Tibial artery (tissue), 4 donors: ENCODE measurements at regions of chr19 and their contacts with region 1.

Region 1: GRCh38 chr19:56594783-56595547 is at the start of gene ZNF71:
- DNase-seq: peak; percentile 82 to 93
- H3K4me3 ChIP-seq: peak within 1 kb of the TSS; percentile 97 to 98
- H3K27ac ChIP-seq: peak within 1 kb of the TSS; percentile 78 to 88
- H3K4me1 ChIP-seq: peaks cover 0 to 13% (median 7%) of the 10 kb centered on the region in 4 donors
- H3K27me3 ChIP-seq: no peaks in the 10 kb centered on the region
- CTCF ChIP-seq: no peak

Region 2: DNA sequence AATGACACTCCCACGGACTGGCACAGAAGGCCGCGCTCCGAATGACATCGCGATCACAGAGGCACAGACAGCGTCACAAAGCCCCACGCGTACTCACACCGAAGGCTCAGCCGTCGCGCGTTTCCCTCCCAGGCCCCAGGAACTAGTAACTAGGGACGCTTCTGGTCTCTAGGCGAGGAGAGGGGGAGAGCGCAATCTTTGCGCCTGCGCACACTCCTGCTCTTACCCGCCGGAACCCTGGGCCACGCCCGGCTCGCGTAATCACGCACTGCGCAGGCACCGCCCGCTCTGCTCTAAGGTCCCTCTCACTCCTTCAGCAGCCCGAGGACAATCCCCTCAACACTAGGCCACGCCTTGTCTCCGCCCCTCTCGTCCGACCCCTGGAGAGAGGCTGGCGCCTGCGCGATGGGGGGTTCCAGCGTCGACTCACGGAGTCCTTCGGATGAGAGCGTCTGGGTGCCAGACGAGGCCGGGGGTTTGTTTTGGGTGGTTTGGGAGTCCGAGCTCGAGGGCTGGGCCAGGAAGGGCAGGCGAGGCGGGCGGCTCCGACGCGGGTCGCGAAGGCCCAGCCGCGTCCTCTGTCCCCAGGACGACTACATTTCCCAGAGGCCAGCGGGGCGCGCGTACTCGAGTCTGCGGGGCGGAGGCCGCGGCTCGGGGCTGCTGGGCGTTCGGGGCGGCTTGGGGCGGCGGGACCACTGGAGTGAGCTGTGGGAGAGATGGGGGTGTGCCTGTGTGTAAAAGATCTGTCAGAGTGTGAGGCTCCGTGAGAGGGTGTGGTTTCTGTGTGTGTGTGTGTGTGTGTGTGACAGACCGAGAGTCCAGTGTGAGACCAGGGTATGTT is 87.3 kb before region 1 on chr19 and contains the start of gene ZNF471:
- intact Hi-C with region 1: loop called (anchors 10 kb)
- DNase-seq: peak; percentile 99
- H3K4me3 ChIP-seq: peak within 1 kb of the TSS; percentile 69 to 82
- H3K27ac ChIP-seq: peak within 1 kb of the TSS; percentile 97 to 99
- H3K4me1 ChIP-seq: peaks cover 0 to 8% (median 4%) of the 10 kb centered on the region in 4 donors
- H3K27me3 ChIP-seq: no peaks in the 10 kb centered on the region
- CTCF ChIP-seq: no peak

Region 3: GRCh38 chr19:56740501-56740900 is 145.5 kb after region 1 on chr19:
- intact Hi-C with region 1: no loop called
- DNase-seq: no peak
- H3K4me3 ChIP-seq: no peak overlapping the region
- H3K27ac ChIP-seq: no peak overlapping the region
- H3K4me1 ChIP-seq: no peaks in the 10 kb centered on the region
- H3K27me3 ChIP-seq: no peaks in the 10 kb centered on the region
- CTCF ChIP-seq: no peak